A549 (cell line): ENCODE measurements at regions of chr1 and their contacts with region 1.

Region 1: DNA sequence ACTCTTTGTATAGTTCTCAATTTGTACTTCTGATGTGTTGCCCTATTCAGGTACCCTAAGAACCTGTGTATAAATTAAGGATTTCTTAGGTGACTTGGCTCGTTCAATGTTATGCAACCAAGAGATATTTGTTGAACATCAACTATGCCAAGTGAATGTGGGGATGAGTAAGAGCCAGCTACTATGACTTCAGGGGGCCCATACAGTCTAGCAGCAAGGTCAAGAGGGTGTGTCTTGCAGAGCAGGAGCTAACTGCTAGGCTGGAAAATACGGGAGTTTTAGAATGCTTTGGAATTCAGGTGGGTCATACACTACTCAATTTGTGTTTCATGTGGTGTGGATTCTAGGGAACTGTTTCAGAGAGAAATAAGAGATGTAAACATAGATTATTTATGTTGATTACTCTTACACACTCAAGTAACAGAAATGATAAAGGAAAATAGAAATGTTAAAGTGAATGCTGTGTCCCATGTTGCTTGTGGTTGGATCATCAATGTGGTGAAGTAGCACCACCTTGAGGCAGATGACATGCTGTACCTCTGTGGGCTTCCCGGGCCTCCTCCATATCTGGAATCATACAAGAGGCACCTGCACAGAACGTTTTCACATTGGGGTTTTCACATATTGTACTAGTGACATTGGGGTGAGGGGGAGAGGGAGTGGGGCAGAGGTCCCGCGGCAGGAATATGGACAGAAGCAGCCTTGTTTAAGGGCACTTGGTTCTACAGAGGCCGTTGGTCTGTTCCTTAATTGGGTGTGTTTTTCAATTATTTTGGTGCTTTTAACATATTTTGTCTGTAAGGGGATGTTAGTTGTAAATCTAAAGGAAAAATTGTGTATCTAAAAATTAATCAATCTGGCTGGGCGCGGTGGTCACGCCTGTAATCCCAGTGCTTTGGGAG is 12.4 kb downstream of the ARPC5 start:
- DNase-seq: peak; percentile 43 to 78
- ATAC-seq: peak; percentile 97 to 99
- H3K4me3 ChIP-seq: no peak overlapping the region
- H3K27ac ChIP-seq: peak overlapping the region in 1 of 2 experiments; percentile 61; a peak in 3 of 6 replicates
- H3K4me1 ChIP-seq: peaks cover 37% of the 10 kb centered on the region
- CTCF ChIP-seq: peak; percentile 71
- EP300 ChIP-seq: no peak
- POLR2A ChIP-seq: no peak
- RAD21 ChIP-seq: peak; percentile 76 to 77

Region 2: DNA sequence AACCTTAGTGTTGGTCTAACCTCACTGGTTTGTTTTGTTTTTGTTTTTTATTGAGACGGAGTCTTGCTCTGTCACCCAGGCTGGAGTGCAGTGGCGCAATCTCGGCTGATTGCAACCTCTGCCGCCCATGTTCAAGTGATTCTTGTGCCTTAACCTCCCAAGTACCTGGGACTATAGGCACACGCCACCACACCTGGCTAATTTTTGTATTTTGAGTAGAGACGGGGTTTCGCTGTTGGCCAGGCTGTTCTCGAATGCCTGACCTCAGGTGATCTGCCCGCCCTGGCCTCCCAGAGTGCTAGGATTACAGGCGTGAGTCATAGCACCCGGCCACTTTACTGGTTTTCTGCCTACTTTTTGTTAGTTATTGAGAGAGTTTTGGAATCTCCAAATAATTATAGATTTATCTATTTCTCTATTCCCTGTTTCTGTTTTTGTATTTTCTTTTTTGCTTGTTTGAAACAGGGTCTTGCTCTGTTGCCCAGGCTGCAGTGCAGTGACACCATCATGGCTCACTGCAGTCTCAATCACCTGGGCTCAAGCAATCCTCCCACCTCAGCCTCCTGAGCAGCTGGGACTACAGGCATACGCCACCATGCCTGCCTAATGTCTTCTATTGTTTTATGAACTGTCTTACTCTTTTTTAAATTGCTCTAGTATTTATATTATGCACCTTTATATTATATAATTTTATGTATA is 129.4 kb before region 1 on chr1:
- CTCF ChIA-PET with region 1: no interaction called
- POLR2A ChIA-PET with region 1: no interaction called
- DNase-seq: no peak
- ATAC-seq: peak in 1 of 2 experiments; percentile 77; a peak in 4 of 6 replicates
- H3K4me3 ChIP-seq: no peak overlapping the region
- H3K27ac ChIP-seq: 0 out of 6 replicates have a peak overlapping the region, but pooled peaks of 1 of the 2 experiments have one; percentile 25
- H3K4me1 ChIP-seq: peaks cover 15% of the 10 kb centered on the region
- CTCF ChIP-seq: no peak
- EP300 ChIP-seq: no peak
- POLR2A ChIP-seq: no peak
- RAD21 ChIP-seq: no peak

Region 3: GRCh38 chr1:183609313-183609712 is 13.8 kb before region 1 on chr1:
- CTCF ChIA-PET with region 1: interaction called, 11 read pairs
- POLR2A ChIA-PET with region 1: interaction called, 6 read pairs
- DNase-seq: peak; percentile 21 to 67
- ATAC-seq: peak; percentile 90 to 94
- H3K4me3 ChIP-seq: no peak overlapping the region
- H3K27ac ChIP-seq: peak overlapping the region; percentile 67 to 69; a peak in 5 of 6 replicates
- H3K4me1 ChIP-seq: peaks cover 31% of the 10 kb centered on the region
- CTCF ChIP-seq: peak; percentile 58
- EP300 ChIP-seq: no peak
- POLR2A ChIP-seq: no peak
- RAD21 ChIP-seq: peak; percentile 56 to 59

Region 4: GRCh38 chr1:183633633-183634343 is 10.7 kb after region 1 on chr1:
- CTCF ChIA-PET with region 1: interaction called, 21 read pairs
- POLR2A ChIA-PET with region 1: interaction called, 3 read pairs
- DNase-seq: peak; percentile 61 to 83
- ATAC-seq: peak; percentile 41 to 56; a peak in 4 of 6 replicates
- H3K4me3 ChIP-seq: peak overlapping the region; percentile 96
- H3K27ac ChIP-seq: peak overlapping the region; percentile 98
- H3K4me1 ChIP-seq: peaks cover 30% of the 10 kb centered on the region
- CTCF ChIP-seq: peak; percentile 75
- EP300 ChIP-seq: no peak
- POLR2A ChIP-seq: no peak
- RAD21 ChIP-seq: peak in 1 of 2 experiments; percentile 28; a peak in 1 of 5 replicates

Region 5: DNA sequence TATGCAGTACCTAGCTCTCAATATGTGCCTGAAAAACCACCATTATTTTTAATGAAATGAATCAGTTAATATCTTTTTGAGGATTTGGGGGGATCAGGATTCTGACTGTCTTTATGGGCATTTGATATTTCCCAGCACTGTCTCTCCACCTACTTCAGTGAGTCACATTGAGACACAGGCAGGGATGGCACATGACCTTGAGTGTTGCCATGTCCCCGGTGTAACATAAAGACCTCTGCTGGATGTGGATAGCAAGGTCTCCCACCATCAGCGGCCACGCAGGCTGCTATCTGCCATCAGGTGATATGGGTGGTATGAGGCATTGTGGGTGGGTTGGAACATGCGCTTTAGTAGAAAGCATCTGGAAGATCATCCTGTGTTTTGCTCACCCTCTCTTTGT is 284.9 kb after region 1 on chr1:
- CTCF ChIA-PET with region 1: no interaction called
- POLR2A ChIA-PET with region 1: no interaction called
- DNase-seq: no peak
- ATAC-seq: no peak
- H3K4me3 ChIP-seq: no peak overlapping the region
- H3K27ac ChIP-seq: no peak overlapping the region
- H3K4me1 ChIP-seq: no peaks in the 10 kb centered on the region
- CTCF ChIP-seq: no peak
- EP300 ChIP-seq: no peak
- POLR2A ChIP-seq: no peak
- RAD21 ChIP-seq: no peak